B cell (primary cell): ENCODE measurements at regions of chr6 and their contacts with region 1.

Region 1: GRCh38 chr6:52664186-52664990 is 6.5 kb upstream of the TMEM14A start:
- DNase-seq: peak; percentile 80
- ATAC-seq: peak; percentile 86
- H3K4me3 ChIP-seq: peak overlapping the region; percentile 58 to 83 (median 70)
- H3K4me3 Mint-ChIP-seq: no peak overlapping the region
- H3K27ac ChIP-seq: peak overlapping the region in 1 of 2 donors; percentile 16
- H3K27ac Mint-ChIP-seq: no peak overlapping the region
- H3K4me1 ChIP-seq: peaks cover 18 to 20% of the 10 kb centered on the region in 2 donors
- H3K4me1 Mint-ChIP-seq: peaks cover 12% of the 10 kb centered on the region
- H3K27me3 ChIP-seq: peaks cover 0 to 7% (median 0%) of the 10 kb centered on the region in 4 experiments
- H3K27me3 Mint-ChIP-seq: no peaks in the 10 kb centered on the region
- CTCF ChIP-seq: no peak

Region 2: DNA sequence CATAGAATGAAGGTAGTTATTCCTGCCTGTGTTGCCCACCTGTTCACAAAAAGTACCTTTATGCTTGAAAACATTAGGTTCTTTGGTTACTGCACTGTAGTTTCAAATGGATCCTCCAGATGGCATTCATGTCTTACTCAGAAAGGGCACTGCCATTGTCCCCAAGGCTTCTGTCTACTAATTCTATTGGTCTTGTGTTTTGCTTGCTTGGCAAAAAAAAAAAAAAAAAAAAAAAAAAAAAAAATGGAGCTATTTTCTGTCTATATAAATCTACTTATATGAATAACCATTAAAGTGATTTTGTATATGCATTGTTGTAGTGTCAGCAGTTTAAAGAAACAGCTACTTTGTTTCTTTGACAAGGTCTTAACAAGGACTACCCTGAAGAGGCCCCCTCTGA is 256.9 kb before region 1 on chr6:
- CTCF ChIA-PET with region 1: interaction called, 21 read pairs
- POLR2A ChIA-PET with region 1: no interaction called
- intact Hi-C with region 1: no loop called
- DNase-seq: peak; percentile 53
- ATAC-seq: peak; percentile 65
- H3K4me3 ChIP-seq: no peak overlapping the region
- H3K4me3 Mint-ChIP-seq: no peak overlapping the region
- H3K27ac ChIP-seq: no peak overlapping the region
- H3K27ac Mint-ChIP-seq: no peak overlapping the region
- H3K4me1 ChIP-seq: no peaks in the 10 kb centered on the region
- H3K4me1 Mint-ChIP-seq: no peaks in the 10 kb centered on the region
- H3K27me3 ChIP-seq: no peaks in the 10 kb centered on the region
- H3K27me3 Mint-ChIP-seq: no peaks in the 10 kb centered on the region
- CTCF ChIP-seq: peak; percentile 54

Region 3: GRCh38 chr6:52497652-52498408 is 166.6 kb before region 1 on chr6:
- CTCF ChIA-PET with region 1: no interaction called
- POLR2A ChIA-PET with region 1: no interaction called
- intact Hi-C with region 1: loop called (anchors 5 kb)
- DNase-seq: peak; percentile 89
- ATAC-seq: peak; percentile 79
- H3K4me3 ChIP-seq: peak overlapping the region in 3 of 5 experiments; percentile 3 to 19 (median 7)
- H3K4me3 Mint-ChIP-seq: peak overlapping the region; percentile 76
- H3K27ac ChIP-seq: peak overlapping the region; percentile 96 to 99
- H3K27ac Mint-ChIP-seq: peak overlapping the region; percentile 96
- H3K4me1 ChIP-seq: peaks cover 43 to 61% of the 10 kb centered on the region in 2 donors
- H3K4me1 Mint-ChIP-seq: peaks cover 66% of the 10 kb centered on the region
- H3K27me3 ChIP-seq: no peaks in the 10 kb centered on the region
- H3K27me3 Mint-ChIP-seq: no peaks in the 10 kb centered on the region
- CTCF ChIP-seq: no peak

Region 4: GRCh38 chr6:52647199-52647598 is 17.2 kb before region 1 on chr6:
- CTCF ChIA-PET with region 1: interaction called, 68 read pairs
- POLR2A ChIA-PET with region 1: no interaction called
- intact Hi-C with region 1: loop called (anchors 1 kb)
- DNase-seq: no peak
- ATAC-seq: no peak
- H3K4me3 ChIP-seq: no peak overlapping the region
- H3K4me3 Mint-ChIP-seq: no peak overlapping the region
- H3K27ac ChIP-seq: no peak overlapping the region
- H3K27ac Mint-ChIP-seq: no peak overlapping the region
- H3K4me1 ChIP-seq: no peaks in the 10 kb centered on the region
- H3K4me1 Mint-ChIP-seq: peaks cover 4% of the 10 kb centered on the region
- H3K27me3 ChIP-seq: no peaks in the 10 kb centered on the region
- H3K27me3 Mint-ChIP-seq: peaks cover 13% of the 10 kb centered on the region
- CTCF ChIP-seq: no peak